Endothelial cell of umbilical vein (primary cell): ENCODE measurements at regions of chrX and their contacts with region 1.

Region 1: DNA sequence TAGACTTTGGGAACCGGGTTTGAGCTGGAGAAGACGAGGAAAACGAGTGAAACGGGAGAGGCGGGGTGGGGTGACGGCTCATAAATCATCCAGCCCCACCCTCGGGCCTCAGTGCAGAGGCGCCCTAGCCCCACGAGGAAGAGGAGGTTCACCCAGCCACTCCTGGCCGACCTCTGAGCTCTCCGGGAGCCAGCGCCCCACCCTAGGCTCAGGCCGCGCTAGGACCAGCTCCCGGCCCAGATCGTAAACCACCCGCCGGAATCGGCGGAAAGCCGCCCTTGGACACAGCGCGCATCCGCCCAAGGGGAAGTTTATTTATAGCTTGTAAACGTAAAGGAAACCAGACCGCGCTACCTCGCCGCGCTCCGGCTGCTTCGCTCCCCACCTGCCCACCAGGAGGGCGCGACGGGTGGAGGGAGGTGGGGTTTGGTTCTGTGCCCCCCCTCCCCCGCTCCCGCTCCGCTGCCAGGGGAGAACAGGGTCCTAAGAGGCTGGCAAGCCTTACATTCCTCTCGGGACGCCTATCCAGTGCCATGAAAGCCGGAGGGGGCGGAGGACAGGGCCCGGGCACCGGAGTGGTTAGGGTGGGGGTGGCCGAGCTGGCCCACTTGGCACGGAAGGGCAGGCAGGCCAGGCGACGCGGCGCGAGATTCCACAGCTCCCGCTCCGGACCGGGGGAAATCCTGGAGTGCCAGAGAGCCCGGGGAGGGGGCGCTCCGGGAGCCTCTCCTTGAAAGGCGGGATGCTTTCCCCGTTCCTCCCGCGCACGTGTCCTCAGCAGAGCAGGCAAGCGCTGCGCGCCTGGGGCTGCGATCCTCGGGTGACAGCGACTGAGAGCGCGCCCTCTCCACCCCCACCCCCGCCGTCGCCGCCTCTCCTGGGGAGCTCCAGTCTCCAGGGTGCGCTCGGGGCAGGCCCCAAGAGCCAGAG is 84.2 kb downstream of the BCOR start:
- DNase-seq: peak; percentile 68
- H3K4me3 ChIP-seq: peak overlapping the region; percentile 4 to 41 (median 33)
- H3K27ac ChIP-seq: peak overlapping the region; percentile 89
- H3K4me1 ChIP-seq: peaks cover 26% of the 10 kb centered on the region
- H3K27me3 ChIP-seq: no peaks in the 10 kb centered on the region
- CTCF ChIP-seq: peak in 1 of 2 donors; percentile 11
- POLR2A ChIP-seq: no peak

Region 2: GRCh38 chrX:39730662-39731397 is 282.7 kb before region 1 on chrX:
- CTCF ChIA-PET with region 1: interaction called, 10 read pairs
- POLR2A ChIA-PET with region 1: no interaction called
- dilution Hi-C with region 1: no loop called
- intact Hi-C with region 1: loop called (anchors 2 kb)
- DNase-seq: peak; percentile 71
- H3K4me3 ChIP-seq: no peak overlapping the region
- H3K27ac ChIP-seq: peak overlapping the region; percentile 2
- H3K4me1 ChIP-seq: peaks cover 29% of the 10 kb centered on the region
- H3K27me3 ChIP-seq: no peaks in the 10 kb centered on the region
- CTCF ChIP-seq: peak; percentile 47 to 60
- POLR2A ChIP-seq: no peak

Region 3: GRCh38 chrX:39820938-39821708 is 192.4 kb before region 1 on chrX:
- CTCF ChIA-PET with region 1: interaction called, 4 read pairs
- POLR2A ChIA-PET with region 1: no interaction called
- dilution Hi-C with region 1: no loop called
- intact Hi-C with region 1: loop called (anchors 2 kb)
- DNase-seq: peak; percentile 13
- H3K4me3 ChIP-seq: peak overlapping the region in 2 of 3 experiments; percentile 11 to 37
- H3K27ac ChIP-seq: no peak overlapping the region
- H3K4me1 ChIP-seq: peaks cover 7% of the 10 kb centered on the region
- H3K27me3 ChIP-seq: no peaks in the 10 kb centered on the region
- CTCF ChIP-seq: no peak
- POLR2A ChIP-seq: no peak

Region 4: DNA sequence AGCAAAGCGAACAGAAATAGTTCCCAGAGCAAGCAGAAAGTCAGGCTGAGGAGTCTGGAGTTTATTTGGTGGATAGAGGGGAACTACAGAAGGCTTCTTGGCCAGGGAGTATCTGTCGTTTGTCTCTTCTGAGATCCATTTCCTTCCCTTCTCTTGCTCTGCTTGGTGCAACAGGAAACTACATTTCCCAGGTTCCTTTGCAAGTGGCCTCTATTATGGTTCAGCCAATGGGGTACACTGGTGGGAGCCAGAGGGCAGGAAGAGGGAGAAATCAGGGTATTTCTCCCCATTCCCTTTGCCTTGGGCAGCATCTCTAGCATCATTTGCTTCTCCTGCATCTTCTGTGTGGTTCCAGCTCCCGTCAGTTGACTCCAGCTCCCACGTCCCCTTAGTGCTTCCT is 57.9 kb before region 1 on chrX:
- CTCF ChIA-PET with region 1: no interaction called
- POLR2A ChIA-PET with region 1: no interaction called
- dilution Hi-C with region 1: no loop called
- intact Hi-C with region 1: loop called (anchors 5 kb)
- DNase-seq: no peak
- H3K4me3 ChIP-seq: no peak overlapping the region
- H3K27ac ChIP-seq: no peak overlapping the region
- H3K4me1 ChIP-seq: peaks cover 8% of the 10 kb centered on the region
- H3K27me3 ChIP-seq: no peaks in the 10 kb centered on the region
- CTCF ChIP-seq: no peak
- POLR2A ChIP-seq: no peak

Region 5: GRCh38 chrX:39984191-39984956 is 29.2 kb before region 1 on chrX:
- CTCF ChIA-PET with region 1: no interaction called
- POLR2A ChIA-PET with region 1: no interaction called
- dilution Hi-C with region 1: no loop called
- intact Hi-C with region 1: no loop called
- DNase-seq: no peak
- H3K4me3 ChIP-seq: no peak overlapping the region
- H3K27ac ChIP-seq: no peak overlapping the region
- H3K4me1 ChIP-seq: no peaks in the 10 kb centered on the region
- H3K27me3 ChIP-seq: no peaks in the 10 kb centered on the region
- CTCF ChIP-seq: no peak
- POLR2A ChIP-seq: no peak

Region 6: GRCh38 chrX:40153335-40154249 is 140.1 kb after region 1 on chrX:
- CTCF ChIA-PET with region 1: interaction called, 3 read pairs
- POLR2A ChIA-PET with region 1: no interaction called
- dilution Hi-C with region 1: no loop called
- intact Hi-C with region 1: loop called (anchors 5 kb)
- DNase-seq: no peak
- H3K4me3 ChIP-seq: peak overlapping the region; percentile 7 to 38 (median 15)
- H3K27ac ChIP-seq: peak overlapping the region; percentile 12
- H3K4me1 ChIP-seq: peaks cover 32% of the 10 kb centered on the region
- H3K27me3 ChIP-seq: no peaks in the 10 kb centered on the region
- CTCF ChIP-seq: no peak
- POLR2A ChIP-seq: no peak

Region 7: DNA sequence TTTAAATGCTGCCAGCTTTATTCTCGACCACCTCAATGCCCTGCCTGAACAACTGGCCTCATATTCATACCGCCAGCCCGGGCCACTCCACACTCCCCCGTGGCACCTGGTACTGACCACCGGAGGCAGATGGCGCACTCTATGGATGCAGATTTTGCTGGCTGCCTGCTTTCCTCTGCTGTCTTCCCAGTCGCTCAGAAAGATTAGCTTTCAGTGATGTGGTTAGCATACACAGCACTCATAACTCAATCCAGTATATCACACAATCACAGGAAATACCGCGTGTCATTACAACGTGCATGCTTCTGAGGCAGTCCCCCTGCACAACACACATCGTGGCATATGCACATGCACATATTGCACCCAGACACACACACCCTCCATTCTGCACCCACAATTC is 231.4 kb after region 1 on chrX:
- CTCF ChIA-PET with region 1: no interaction called
- POLR2A ChIA-PET with region 1: no interaction called
- dilution Hi-C with region 1: no loop called
- intact Hi-C with region 1: loop called (anchors 5 kb)
- DNase-seq: peak; percentile 77
- H3K4me3 ChIP-seq: no peak overlapping the region
- H3K27ac ChIP-seq: no peak overlapping the region
- H3K4me1 ChIP-seq: peaks cover 3% of the 10 kb centered on the region
- H3K27me3 ChIP-seq: no peaks in the 10 kb centered on the region
- CTCF ChIP-seq: no peak
- POLR2A ChIP-seq: no peak

Region 8: DNA sequence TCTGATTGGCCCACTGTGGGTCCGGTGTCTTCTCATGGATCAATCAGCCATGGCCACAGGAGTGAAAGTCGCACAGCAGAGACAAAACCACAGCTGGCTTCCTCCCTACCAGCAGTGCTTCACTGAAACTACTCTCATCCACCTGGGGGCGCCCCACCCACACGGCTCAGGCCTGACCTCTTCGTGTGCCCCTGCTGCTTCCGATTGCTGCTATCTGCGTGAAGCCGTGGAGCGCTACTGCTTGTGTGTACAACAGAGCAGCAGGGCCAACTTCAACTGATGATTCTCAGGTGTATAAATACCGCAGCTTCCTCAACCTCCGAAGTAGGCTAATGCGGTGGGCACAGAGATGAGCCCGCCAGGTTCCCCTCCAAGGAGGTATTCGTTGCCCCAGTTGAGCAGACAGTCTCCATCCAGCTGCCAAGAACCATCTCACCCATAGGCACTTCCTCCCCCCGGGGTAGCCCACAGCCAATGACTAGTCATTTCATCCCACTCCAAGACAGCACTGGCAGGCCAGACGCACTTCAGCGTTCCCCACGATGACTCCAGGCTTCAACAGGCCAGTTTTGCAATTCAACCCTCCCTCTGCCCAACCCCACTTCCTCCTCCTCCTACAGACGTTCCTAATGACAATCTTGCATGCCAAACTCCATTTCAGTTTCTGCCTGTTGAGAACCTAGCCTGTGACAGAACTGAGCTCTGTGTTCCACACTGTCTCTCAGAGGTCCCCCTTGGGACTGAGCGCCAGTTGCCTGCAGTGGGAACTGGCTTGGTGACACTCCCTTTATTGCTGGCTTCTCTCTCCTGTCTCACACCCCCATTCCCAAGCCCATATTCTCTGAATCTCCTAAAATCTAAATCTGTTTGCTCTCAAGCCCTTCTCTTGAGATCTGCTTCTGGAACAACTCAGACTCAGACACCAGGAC is 525.9 kb after region 1 on chrX:
- CTCF ChIA-PET with region 1: no interaction called
- POLR2A ChIA-PET with region 1: no interaction called
- dilution Hi-C with region 1: no loop called
- intact Hi-C with region 1: no loop called
- DNase-seq: no peak
- H3K4me3 ChIP-seq: no peak overlapping the region
- H3K27ac ChIP-seq: no peak overlapping the region
- H3K4me1 ChIP-seq: peaks cover 6% of the 10 kb centered on the region
- H3K27me3 ChIP-seq: peaks cover 5 to 19% of the 10 kb centered on the region in 2 experiments
- CTCF ChIP-seq: no peak
- POLR2A ChIP-seq: no peak